T-cell (primary cell): ENCODE measurements at regions of chr1 and their contacts with region 1.

Region 1: GRCh38 chr1:175154629-175155472 is 37.7 kb downstream of the KIAA0040 start:
- DNase-seq: peak; percentile 41 to 84 (median 70)
- ATAC-seq: peak; percentile 57 to 67 (median 62)
- H3K4me3 ChIP-seq: no peak overlapping the region
- H3K4me3 Mint-ChIP-seq: no peak overlapping the region
- H3K27ac ChIP-seq: no peak overlapping the region
- H3K27ac Mint-ChIP-seq: no peak overlapping the region
- H3K4me1 ChIP-seq: peaks cover 4 to 8% of the 10 kb centered on the region in 2 experiments
- H3K4me1 Mint-ChIP-seq: peaks cover 15 to 21% (median 20%) of the 10 kb centered on the region in 3 donors
- H3K27me3 ChIP-seq: peaks cover 2 to 25% of the 10 kb centered on the region in 2 experiments
- H3K27me3 Mint-ChIP-seq: peaks cover 26 to 36% of the 10 kb centered on the region in 2 donors

Region 2: DNA sequence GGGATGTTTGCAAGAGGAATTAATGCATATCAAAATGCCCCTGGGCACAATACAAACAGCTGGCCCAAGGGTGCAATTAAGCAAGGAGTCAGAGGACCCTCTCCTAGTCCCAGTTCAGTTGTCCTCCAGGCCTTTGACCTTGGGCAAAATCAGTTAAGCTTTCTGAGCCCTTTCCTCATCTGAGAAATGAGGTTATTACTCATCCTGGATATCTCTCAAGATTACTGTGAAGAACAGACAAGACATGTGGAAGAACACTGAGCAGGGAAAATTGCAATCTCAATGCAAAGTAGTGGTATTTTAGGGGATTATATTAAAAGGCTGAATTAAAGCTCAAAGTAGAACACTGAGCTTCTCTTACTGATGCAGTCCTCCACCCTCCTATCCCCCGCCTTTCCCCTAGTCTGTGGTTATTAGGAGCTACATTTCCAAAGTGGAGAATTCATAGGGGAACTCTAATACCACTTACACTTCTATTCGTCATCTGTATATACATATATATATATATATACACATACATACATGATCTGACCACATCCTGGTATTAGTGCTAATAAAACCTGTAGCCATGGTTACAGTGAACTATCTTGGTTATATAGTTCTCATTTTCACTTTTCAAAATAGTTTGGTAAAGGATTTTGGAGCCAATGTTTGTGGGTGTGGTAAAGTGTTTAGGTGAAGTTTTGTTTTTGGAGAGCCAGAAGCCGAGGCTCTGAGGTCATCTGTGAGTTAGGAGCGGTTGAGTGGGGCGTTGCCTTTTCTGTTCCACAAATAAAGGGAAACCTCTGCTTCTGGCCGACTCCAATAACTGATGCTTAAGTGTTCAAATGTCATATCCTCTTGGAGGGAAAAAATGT is 19.7 kb after region 1 on chr1:
- CTCF ChIA-PET with region 1: interaction called, 7 to 11 read pairs
- POLR2A ChIA-PET with region 1: no interaction called
- DNase-seq: peak in 3 of 35 experiments; percentile 2 to 42 (median 5)
- ATAC-seq: peak in 1 of 4 experiments; percentile 55
- H3K4me3 ChIP-seq: no peak overlapping the region
- H3K4me3 Mint-ChIP-seq: no peak overlapping the region
- H3K27ac ChIP-seq: no peak overlapping the region
- H3K27ac Mint-ChIP-seq: peak overlapping the region; percentile 21 to 53
- H3K4me1 ChIP-seq: peaks cover 0 to 25% of the 10 kb centered on the region in 2 experiments
- H3K4me1 Mint-ChIP-seq: peaks cover 61 to 82% (median 76%) of the 10 kb centered on the region in 3 donors
- H3K27me3 ChIP-seq: no peaks in the 10 kb centered on the region
- H3K27me3 Mint-ChIP-seq: no peaks in the 10 kb centered on the region

Region 3: DNA sequence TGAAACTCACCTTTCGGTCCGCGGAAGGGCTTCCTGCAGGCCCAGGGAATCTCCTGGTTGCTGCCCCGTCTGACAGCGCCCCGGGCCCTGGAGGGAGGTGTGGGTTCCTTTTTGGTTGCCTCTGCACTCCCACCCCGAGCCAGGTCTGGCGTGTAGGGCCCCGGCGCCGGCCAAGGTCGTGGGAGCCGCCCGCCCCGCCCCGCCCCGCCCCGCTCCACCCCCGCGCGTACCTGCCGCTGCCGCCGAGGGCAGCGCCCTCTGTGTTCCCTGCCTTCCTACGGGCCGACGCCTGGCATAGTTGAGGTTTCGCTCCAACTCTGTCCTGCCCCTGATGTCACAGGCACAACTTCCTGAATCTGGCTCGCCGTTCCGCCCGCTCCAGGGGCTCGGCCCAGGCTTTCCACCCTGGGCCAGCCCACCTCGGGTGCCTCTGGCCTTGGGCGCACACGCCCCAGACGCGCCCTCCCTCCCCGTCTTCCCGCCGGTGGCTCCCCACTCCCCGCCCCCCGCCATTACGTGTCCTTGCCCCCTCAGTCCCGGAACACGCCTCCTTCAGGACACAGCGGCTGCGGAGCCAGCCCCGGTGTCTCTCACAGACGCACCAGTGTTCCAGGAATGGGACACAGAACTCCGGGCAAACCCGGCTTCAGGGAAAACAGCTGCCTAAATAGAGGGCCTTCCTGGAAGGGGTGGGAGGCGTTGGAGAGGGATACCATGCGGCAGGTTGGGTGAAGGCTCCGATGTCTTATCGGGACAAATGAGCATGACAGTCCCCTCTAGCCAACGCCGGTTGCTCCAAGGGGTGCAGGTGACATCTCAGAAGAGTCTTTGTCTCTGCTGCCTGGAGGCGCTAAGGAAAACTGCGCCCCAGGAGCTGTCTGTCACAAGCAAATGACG is 38.0 kb after region 1 on chr1 and contains the start of gene KIAA0040:
- CTCF ChIA-PET with region 1: interaction called, 4 to 23 read pairs
- POLR2A ChIA-PET with region 1: no interaction called
- DNase-seq: peak in 32 of 35 experiments; percentile 8 to 74 (median 34)
- ATAC-seq: peak; percentile 61 to 71 (median 66)
- H3K4me3 ChIP-seq: peak within 1 kb of the TSS; percentile 63 to 97
- H3K4me3 Mint-ChIP-seq: peak within 1 kb of the TSS; percentile 86 to 98 (median 96)
- H3K27ac ChIP-seq: peak within 1 kb of the TSS; percentile 61
- H3K27ac Mint-ChIP-seq: peak within 1 kb of the TSS; percentile 88 to 95
- H3K4me1 ChIP-seq: peaks cover 34 to 47% of the 10 kb centered on the region in 2 experiments
- H3K4me1 Mint-ChIP-seq: peaks cover 51 to 66% (median 56%) of the 10 kb centered on the region in 3 donors
- H3K27me3 ChIP-seq: no peaks in the 10 kb centered on the region
- H3K27me3 Mint-ChIP-seq: no peaks in the 10 kb centered on the region
- total RNA-seq, gene KIAA0040: 33.0 to 60.0 (median 50.5) TPM

Region 4: DNA sequence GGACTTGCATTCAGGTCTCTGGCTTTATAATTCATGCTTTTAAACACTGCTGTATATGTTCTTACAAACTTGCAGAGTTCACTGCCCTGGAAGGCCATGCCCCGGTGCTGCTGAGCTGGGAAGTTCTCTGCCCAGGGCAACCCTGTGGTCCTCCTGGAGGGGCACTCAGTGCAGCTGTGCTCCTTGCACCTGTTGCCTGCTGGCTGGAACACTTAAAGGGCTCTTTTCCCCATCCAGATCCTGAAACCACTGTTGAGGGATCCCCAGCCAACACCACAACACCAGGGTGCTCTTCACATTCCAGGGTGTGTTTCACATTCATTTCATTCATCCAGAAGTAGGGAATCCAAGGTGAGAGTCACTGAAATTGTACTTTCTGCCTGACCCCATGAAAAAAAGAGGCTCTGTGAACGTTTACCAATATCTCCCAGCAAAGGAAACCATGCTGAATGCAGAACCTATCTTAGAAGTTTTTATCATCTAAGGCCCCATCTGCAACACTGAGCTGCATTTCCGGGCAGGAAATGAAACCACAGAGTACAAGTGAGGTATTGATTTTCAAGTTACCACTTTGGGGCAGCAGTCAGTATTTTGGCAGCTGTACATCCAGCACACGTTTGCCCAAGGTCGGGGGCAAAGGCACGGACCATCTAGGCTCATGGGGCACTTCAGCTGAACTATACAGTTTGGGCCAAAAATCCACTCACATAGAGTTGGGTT is 54.1 kb after region 1 on chr1:
- CTCF ChIA-PET with region 1: interaction called, 14 read pairs
- POLR2A ChIA-PET with region 1: no interaction called
- DNase-seq: peak; percentile 24 to 81 (median 55)
- ATAC-seq: peak; percentile 95 to 96 (median 96)
- H3K4me3 ChIP-seq: peak overlapping the region; percentile 6 to 60
- H3K4me3 Mint-ChIP-seq: peak overlapping the region; percentile 72 to 79 (median 76)
- H3K27ac ChIP-seq: peak overlapping the region; percentile 78
- H3K27ac Mint-ChIP-seq: peak overlapping the region; percentile 96 to 98
- H3K4me1 ChIP-seq: peaks cover 36 to 48% of the 10 kb centered on the region in 2 experiments
- H3K4me1 Mint-ChIP-seq: peaks cover 72 to 86% (median 86%) of the 10 kb centered on the region in 3 donors
- H3K27me3 ChIP-seq: no peaks in the 10 kb centered on the region
- H3K27me3 Mint-ChIP-seq: no peaks in the 10 kb centered on the region

Region 5: DNA sequence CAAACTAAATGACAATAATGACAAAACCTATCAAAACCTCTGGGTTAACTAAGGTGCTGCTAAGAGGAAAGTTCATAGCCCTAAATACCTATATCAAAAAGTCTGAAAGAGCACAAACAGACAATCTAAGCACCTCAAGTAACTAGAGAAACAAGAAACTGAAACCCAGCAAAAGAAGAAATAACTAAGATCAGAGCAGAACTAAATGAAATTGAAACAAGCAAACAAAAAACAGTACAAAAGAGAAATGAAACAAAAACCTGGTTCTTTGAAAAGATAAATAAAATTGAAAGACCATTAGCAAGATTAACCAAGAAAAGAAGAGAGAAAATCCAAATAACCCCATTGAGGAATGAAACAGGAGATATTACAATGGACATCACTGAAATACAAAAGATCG is 82.5 kb after region 1 on chr1:
- CTCF ChIA-PET with region 1: no interaction called
- POLR2A ChIA-PET with region 1: no interaction called
- DNase-seq: no peak
- ATAC-seq: no peak
- H3K4me3 ChIP-seq: no peak overlapping the region
- H3K4me3 Mint-ChIP-seq: no peak overlapping the region
- H3K27ac ChIP-seq: no peak overlapping the region
- H3K27ac Mint-ChIP-seq: peak overlapping the region in 1 of 2 donors; percentile 11
- H3K4me1 ChIP-seq: peaks cover 8 to 12% of the 10 kb centered on the region in 2 experiments
- H3K4me1 Mint-ChIP-seq: peaks cover 22 to 38% (median 36%) of the 10 kb centered on the region in 3 donors
- H3K27me3 ChIP-seq: peaks cover 0 to 4% of the 10 kb centered on the region in 2 experiments
- H3K27me3 Mint-ChIP-seq: no peaks in the 10 kb centered on the region

Region 6: DNA sequence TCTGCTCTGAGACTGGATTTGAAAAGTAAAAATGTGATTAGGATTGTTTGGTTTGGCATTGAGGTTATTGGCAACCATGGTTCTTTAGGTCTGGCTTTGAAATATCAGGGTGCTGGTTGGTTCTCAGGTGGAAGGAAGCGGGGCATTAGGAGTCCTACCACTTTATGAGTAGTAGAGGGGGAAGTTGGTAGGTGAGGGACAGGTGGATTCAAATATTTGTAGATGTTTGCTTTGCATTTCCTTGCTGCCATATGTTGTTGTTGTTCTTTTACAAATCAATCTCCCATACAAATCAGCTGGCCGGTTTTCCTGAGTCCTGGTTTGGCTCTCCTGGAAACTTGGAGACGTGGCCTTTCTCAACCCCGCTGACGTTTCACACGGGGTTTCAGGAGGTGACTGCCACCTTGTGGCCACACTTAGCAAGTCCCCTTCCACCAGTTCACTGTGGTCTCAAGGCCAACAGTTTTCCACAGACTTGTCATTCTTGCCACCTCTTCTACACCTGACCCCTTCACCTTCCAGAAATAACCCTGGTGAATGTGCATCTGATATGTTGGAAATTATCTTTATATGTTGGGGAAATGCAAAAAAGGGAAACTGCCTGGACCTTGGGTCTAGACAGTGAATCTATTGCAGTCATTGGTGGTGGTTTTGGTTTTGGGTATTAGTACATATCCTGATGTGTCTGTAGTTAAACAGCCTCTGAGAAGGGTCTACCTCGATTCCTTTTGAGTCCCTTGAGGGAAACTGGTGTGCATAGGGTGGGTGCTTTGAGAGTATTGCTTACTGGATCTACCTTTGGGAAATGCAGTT is 164.8 kb after region 1 on chr1:
- CTCF ChIA-PET with region 1: interaction called, 124 to 237 read pairs
- POLR2A ChIA-PET with region 1: interaction called, 3 to 5 read pairs
- DNase-seq: peak; percentile 21 to 86 (median 60)
- ATAC-seq: peak; percentile 75 to 82 (median 79)
- H3K4me3 ChIP-seq: no peak overlapping the region
- H3K4me3 Mint-ChIP-seq: no peak overlapping the region
- H3K27ac ChIP-seq: no peak overlapping the region
- H3K27ac Mint-ChIP-seq: no peak overlapping the region
- H3K4me1 ChIP-seq: peaks cover 2 to 5% of the 10 kb centered on the region in 2 experiments
- H3K4me1 Mint-ChIP-seq: peaks cover 7 to 12% (median 11%) of the 10 kb centered on the region in 3 donors
- H3K27me3 ChIP-seq: peaks cover 0 to 6% of the 10 kb centered on the region in 2 experiments
- H3K27me3 Mint-ChIP-seq: peaks cover 4% of the 10 kb centered on the region in 2 donors

Region 7: DNA sequence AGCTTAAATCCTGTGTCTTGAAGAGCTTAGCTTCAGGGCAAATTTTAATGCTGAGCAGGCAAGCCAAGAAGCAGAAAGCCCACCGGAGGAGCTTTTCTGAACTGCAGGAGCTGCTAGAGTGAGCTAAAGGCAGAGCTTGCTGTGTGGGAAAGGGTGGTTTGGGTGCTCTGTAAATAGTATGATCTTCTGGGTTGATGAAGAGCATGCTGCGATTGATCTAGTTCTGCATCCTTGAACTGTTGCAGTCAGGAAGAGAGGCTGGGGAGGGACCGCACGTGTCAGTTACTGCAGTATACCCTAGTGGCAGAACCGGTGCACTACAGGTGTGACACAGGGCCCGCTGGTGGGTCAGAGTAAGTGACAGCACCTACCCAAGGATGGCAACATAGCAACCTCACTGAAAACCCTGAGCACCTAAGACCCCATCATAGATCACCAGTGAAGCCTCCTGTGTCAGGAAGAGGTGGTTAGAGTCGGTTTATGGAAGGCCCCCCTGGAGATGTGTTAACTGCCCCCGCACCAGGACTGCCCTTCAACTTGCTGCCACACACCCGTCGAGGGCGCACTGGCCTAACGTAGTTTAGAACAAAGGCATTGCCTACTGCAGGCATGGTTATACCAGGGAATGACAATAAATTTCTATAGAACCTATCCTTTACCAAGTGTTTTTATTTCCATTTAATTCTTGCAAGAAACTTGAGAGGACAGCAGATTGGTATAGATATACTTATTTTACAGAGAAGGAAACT is 183.7 kb after region 1 on chr1:
- CTCF ChIA-PET with region 1: interaction called, 9 to 15 read pairs
- POLR2A ChIA-PET with region 1: no interaction called
- DNase-seq: peak in 34 of 35 experiments; percentile 16 to 70 (median 48)
- ATAC-seq: peak; percentile 88 to 93 (median 89)
- H3K4me3 ChIP-seq: no peak overlapping the region
- H3K4me3 Mint-ChIP-seq: no peak overlapping the region
- H3K27ac ChIP-seq: no peak overlapping the region
- H3K27ac Mint-ChIP-seq: no peak overlapping the region
- H3K4me1 ChIP-seq: peaks cover 0 to 4% of the 10 kb centered on the region in 2 experiments
- H3K4me1 Mint-ChIP-seq: peaks cover 3 to 6% (median 6%) of the 10 kb centered on the region in 3 donors
- H3K27me3 ChIP-seq: peaks cover 4 to 9% of the 10 kb centered on the region in 2 experiments
- H3K27me3 Mint-ChIP-seq: peaks cover 13 to 26% of the 10 kb centered on the region in 2 donors

Region 8: DNA sequence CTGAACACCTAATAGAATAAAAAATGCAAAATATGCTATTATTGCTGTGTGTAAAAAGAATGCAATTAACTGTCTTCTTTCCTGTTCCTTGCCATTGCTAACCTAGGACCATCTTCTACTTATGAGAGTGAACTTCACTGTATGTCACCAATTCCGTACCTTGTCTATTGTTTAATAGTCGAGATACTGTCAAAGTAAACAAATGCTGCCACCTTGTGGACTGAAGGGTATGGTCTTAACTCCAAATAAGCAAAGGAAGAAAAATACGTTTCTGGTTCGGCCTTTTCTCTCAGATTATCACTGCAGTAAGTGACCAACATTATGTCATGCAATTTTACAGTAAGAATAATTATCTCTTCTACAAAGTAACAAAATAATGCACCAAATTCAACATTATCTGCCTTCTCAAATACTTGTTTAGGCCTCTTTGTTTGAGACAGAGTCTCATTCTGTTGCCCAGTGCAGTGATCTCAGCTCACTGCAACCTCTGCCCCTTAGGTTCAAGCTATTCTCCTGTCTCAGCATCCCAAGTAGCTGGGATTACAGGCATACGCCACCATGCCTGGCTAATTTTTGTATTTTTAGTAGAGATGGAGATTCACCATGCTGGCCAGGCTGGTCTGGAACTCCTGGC is 918.8 kb after region 1 on chr1:
- CTCF ChIA-PET with region 1: interaction called, 5 to 15 read pairs
- POLR2A ChIA-PET with region 1: no interaction called
- DNase-seq: peak in 14 of 35 experiments; percentile 3 to 63 (median 21)
- ATAC-seq: peak in 2 of 4 experiments; percentile 42 to 46
- H3K4me3 ChIP-seq: no peak overlapping the region
- H3K4me3 Mint-ChIP-seq: no peak overlapping the region
- H3K27ac ChIP-seq: no peak overlapping the region
- H3K27ac Mint-ChIP-seq: no peak overlapping the region
- H3K4me1 ChIP-seq: no peaks in the 10 kb centered on the region
- H3K4me1 Mint-ChIP-seq: peaks cover 6 to 12% (median 12%) of the 10 kb centered on the region in 3 donors
- H3K27me3 ChIP-seq: no peaks in the 10 kb centered on the region
- H3K27me3 Mint-ChIP-seq: no peaks in the 10 kb centered on the region